ENCODE measurements at regions of chr7 and their contacts with region 1.

Region 1: GRCh38 chr7:9017286-9017685 is 583.9 kb downstream of the NXPH1 start:
- DNase-seq: no peak
- H3K4me3 ChIP-seq: no peak overlapping the region
- H3K4me3 Mint-ChIP-seq: no peak overlapping the region
- H3K27ac Mint-ChIP-seq: no peak overlapping the region
- H3K4me1 ChIP-seq: no peaks in the 10 kb centered on the region
- H3K4me1 Mint-ChIP-seq: no peaks in the 10 kb centered on the region
- H3K27me3 ChIP-seq: no peaks in the 10 kb centered on the region
- H3K27me3 Mint-ChIP-seq: peaks cover 6% of the 10 kb centered on the region
- CTCF ChIP-seq: no peak

Region 2: DNA sequence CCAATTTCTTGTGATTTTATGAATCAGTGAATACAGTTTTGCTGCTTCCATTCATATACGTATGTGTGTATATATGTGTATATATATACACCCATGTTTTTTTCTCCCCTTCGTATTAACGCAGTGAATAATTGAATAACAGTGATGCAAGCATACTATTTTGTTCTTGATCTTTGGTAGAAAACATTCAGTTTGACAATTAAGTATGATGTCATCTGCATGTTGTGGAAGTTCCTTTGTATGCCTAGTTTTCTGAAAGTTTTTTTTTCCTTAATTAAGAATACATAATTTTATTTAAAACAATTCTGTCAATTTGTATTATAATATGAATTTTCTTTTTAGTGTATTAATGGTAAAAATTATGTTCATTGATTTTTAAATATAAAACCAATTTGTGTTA is 26.4 kb after region 1 on chr7:
- CTCF ChIA-PET with region 1: no interaction called
- POLR2A ChIA-PET with region 1: no interaction called
- intact Hi-C with region 1: loop called (anchors 1 kb)
- DNase-seq: no peak
- H3K4me3 ChIP-seq: no peak overlapping the region
- H3K4me3 Mint-ChIP-seq: no peak overlapping the region
- H3K27ac Mint-ChIP-seq: no peak overlapping the region
- H3K4me1 ChIP-seq: no peaks in the 10 kb centered on the region
- H3K4me1 Mint-ChIP-seq: no peaks in the 10 kb centered on the region
- H3K27me3 ChIP-seq: no peaks in the 10 kb centered on the region
- H3K27me3 Mint-ChIP-seq: no peaks in the 10 kb centered on the region
- CTCF ChIP-seq: no peak

Measured in Caco-2 (cell line).